Dorsolateral prefrontal cortex (tissue), 120 donors: ENCODE measurements at regions of chrX and their contacts with region 1.

Region 1: DNA sequence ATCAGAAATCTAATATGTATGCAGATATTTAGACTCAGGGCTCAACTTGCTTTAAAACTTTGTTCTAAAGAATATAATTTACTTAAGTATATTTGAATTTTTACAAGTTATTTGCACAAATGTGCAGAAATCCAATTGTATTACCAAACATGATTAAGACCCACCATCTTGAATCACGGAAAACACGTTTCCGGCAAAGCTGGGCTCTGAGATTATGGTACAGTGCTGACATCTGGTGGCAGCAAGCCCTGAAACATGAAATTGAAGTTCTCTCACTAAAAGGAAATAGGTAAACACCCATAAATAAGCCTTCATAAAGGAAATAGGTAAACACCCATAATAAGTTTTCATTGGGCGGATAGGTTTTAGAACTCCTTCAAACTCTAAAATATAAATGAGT is 98.3 kb upstream of the MAOA start:
- DNase-seq: peak in 7 of 10 donors; percentile 6 to 68 (median 45)
- H3K4me3 ChIP-seq: peak overlapping the region in 1 of 59 donors; percentile 17
- H3K27ac ChIP-seq: no peak overlapping the region
- H3K27me3 ChIP-seq: peaks cover 0 to 60% (median 9%) of the 10 kb centered on the region in 45 donors
- CTCF ChIP-seq: peak in 55 of 56 donors; percentile 57 to 84 (median 72)

Region 2: DNA sequence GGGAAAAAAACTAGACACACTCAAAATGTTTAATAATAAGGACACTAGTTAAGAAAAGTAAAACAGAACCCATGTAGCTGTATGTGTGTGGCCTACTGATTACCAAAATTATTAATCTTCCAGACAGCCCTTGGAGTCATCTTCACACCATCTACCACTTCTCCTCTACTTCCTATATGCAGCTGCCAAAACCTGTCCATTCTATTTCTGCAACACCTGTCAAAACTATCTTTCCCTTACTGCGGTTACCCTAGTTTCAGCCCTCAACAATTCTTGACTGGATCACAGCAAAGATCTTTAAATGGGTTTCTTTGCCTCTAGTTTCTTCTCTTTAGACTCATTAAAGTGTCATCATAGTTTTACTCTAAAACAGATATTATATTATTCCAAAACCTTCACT is 1761.2 kb before region 1 on chrX:
- intact Hi-C with region 1: loop called in 1 of 2 experiments (anchors 10 kb)
- DNase-seq: no peak
- H3K4me3 ChIP-seq: no peak overlapping the region
- H3K27ac ChIP-seq: no peak overlapping the region
- H3K27me3 ChIP-seq: peaks cover 0 to 66% (median 13%) of the 10 kb centered on the region in 45 donors
- CTCF ChIP-seq: no peak

Region 3: DNA sequence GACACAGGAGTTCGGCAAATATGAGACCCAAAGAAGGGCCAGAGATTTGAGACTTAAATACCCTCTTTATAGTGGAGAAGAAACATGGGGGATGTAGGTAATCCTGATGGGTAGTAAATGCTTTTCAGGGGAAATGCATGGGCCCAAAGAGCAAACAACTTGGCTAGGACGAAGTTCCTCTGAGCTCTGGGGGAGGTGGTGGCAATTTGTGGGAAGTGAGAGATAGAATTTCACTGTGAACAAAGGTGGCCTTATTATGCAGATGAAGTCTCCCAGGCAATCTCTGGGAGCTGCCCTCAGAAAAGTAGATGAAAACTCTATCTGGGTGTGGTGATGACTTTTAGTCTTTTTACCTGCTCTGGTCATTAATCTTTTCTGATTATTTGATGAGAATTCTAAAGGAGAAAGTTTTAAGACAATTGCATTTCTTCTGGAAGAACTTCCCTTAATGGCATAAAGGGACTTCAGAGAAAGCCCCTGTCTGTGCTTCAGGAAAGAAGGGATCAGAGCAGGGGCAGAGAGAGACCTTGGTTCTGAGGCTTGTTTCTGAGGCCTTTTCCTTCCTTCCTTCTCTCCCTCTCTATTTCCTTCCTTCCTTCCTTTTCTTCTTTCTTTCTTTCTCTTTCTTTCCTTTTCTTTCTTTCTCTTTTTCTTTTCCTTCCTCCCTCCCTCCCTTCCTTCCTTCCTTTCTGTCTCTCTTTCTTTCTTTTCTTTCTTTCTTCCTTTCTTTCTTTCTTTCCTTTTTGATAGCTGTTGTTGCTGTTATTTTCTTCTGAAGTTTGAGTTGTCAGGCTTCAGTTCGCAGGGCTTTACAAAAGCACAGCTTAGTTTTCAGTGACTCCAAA is 60.8 kb after region 1 on chrX:
- intact Hi-C with region 1: no loop called
- DNase-seq: no peak
- H3K4me3 ChIP-seq: no peak overlapping the region
- H3K27ac ChIP-seq: no peak overlapping the region
- H3K27me3 ChIP-seq: peaks cover 0 to 52% (median 20%) of the 10 kb centered on the region in 45 donors
- CTCF ChIP-seq: no peak

Region 4: GRCh38 chrX:43654431-43655150 is 96.8 kb after region 1 on chrX:
- intact Hi-C with region 1: loop called in 1 of 2 experiments (anchors 10 kb)
- DNase-seq: peak; percentile 78 to 92 (median 90)
- H3K4me3 ChIP-seq: peak overlapping the region; percentile 40 to 83 (median 66)
- H3K27ac ChIP-seq: peak overlapping the region in 57 of 59 donors; percentile 20 to 94 (median 84)
- H3K27me3 ChIP-seq: peaks cover 0 to 37% (median 0%) of the 10 kb centered on the region in 45 donors
- CTCF ChIP-seq: peak in 40 of 56 donors; percentile 7 to 55 (median 36)

Region 5: GRCh38 chrX:43750248-43750676 is 192.5 kb after region 1 on chrX:
- intact Hi-C with region 1: loop called (anchors 1 to 5 kb)
- DNase-seq: peak in 4 of 10 donors; percentile 5 to 44 (median 32)
- H3K4me3 ChIP-seq: no peak overlapping the region
- H3K27ac ChIP-seq: no peak overlapping the region
- H3K27me3 ChIP-seq: peaks cover 0 to 65% (median 8%) of the 10 kb centered on the region in 45 donors
- CTCF ChIP-seq: peak; percentile 17 to 82 (median 63)

Region 6: GRCh38 chrX:43949669-43950068 is 391.9 kb after region 1 on chrX:
- intact Hi-C with region 1: loop called in 1 of 2 experiments (anchors 10 kb)
- DNase-seq: peak in 9 of 10 donors; percentile 26 to 72 (median 58)
- H3K4me3 ChIP-seq: peak overlapping the region in 5 of 59 donors; percentile 1 to 26 (median 10)
- H3K27ac ChIP-seq: peak overlapping the region in 15 of 59 donors; percentile 2 to 59 (median 30)
- H3K27me3 ChIP-seq: peaks cover 0 to 89% (median 30%) of the 10 kb centered on the region in 45 donors
- CTCF ChIP-seq: peak in 54 of 56 donors; percentile 19 to 67 (median 50)